CD4-positive, alpha-beta memory T cell (primary cell): ENCODE measurements at regions of chr9 and their contacts with region 1.

Region 1: GRCh38 chr9:78053627-78054026 is 22.0 kb upstream of the GNAQ start:
- DNase-seq: no peak
- H3K4me3 ChIP-seq: no peak overlapping the region
- H3K4me3 Mint-ChIP-seq: peak overlapping the region in 6 of 8 donors; percentile 20 to 82 (median 68)
- H3K27ac ChIP-seq: no peak overlapping the region
- H3K27ac Mint-ChIP-seq: peak overlapping the region in 3 of 7 donors; percentile 35 to 77 (median 67)
- H3K4me1 ChIP-seq: peaks cover 20% of the 10 kb centered on the region
- H3K4me1 Mint-ChIP-seq: peaks cover 14 to 32% (median 23%) of the 10 kb centered on the region in 4 donors
- H3K27me3 ChIP-seq: no peaks in the 10 kb centered on the region
- H3K27me3 Mint-ChIP-seq: no peaks in the 10 kb centered on the region

Region 2: GRCh38 chr9:78074385-78075291 is 21.0 kb after region 1 on chr9:
- CTCF ChIA-PET with region 1: interaction called, 3 read pairs
- POLR2A ChIA-PET with region 1: interaction called, 7 read pairs
- intact Hi-C with region 1: loop called (anchors 1 kb)
- DNase-seq: peak; percentile 31 to 55 (median 48)
- H3K4me3 ChIP-seq: peak overlapping the region in 1 of 2 donors; percentile 44
- H3K4me3 Mint-ChIP-seq: peak overlapping the region; percentile 62 to 89 (median 80)
- H3K27ac ChIP-seq: peak overlapping the region; percentile 7
- H3K27ac Mint-ChIP-seq: peak overlapping the region; percentile 80 to 96 (median 91)
- H3K4me1 ChIP-seq: peaks cover 40% of the 10 kb centered on the region
- H3K4me1 Mint-ChIP-seq: peaks cover 45 to 60% (median 54%) of the 10 kb centered on the region in 4 donors
- H3K27me3 ChIP-seq: no peaks in the 10 kb centered on the region
- H3K27me3 Mint-ChIP-seq: no peaks in the 10 kb centered on the region

Region 3: DNA sequence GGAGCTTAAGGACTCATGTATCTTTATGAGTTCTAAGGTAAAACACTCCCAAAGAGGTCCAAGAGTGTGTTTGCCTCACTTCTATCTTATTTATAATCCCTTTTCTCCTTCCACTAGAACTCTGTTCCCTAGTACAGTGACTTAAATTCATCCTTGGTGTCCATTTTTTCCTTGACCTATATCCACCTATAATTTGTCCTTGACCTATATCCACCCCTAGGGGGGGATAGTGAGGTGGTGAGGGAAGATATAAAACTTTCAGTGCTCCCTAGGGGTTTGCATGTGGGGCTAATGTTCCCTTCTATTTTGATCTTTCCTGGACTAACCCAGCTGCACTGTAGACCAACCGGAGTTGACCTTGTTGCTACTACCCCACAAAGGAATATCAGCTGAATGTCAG is 61.4 kb after region 1 on chr9:
- CTCF ChIA-PET with region 1: interaction called, 12 read pairs
- POLR2A ChIA-PET with region 1: no interaction called
- intact Hi-C with region 1: no loop called
- DNase-seq: peak in 1 of 5 donors; percentile 21
- H3K4me3 ChIP-seq: no peak overlapping the region
- H3K4me3 Mint-ChIP-seq: no peak overlapping the region
- H3K27ac ChIP-seq: no peak overlapping the region
- H3K27ac Mint-ChIP-seq: peak overlapping the region in 1 of 7 donors; percentile 40
- H3K4me1 ChIP-seq: peaks cover 52% of the 10 kb centered on the region
- H3K4me1 Mint-ChIP-seq: peaks cover 44 to 70% (median 54%) of the 10 kb centered on the region in 4 donors
- H3K27me3 ChIP-seq: no peaks in the 10 kb centered on the region
- H3K27me3 Mint-ChIP-seq: no peaks in the 10 kb centered on the region

Region 4: DNA sequence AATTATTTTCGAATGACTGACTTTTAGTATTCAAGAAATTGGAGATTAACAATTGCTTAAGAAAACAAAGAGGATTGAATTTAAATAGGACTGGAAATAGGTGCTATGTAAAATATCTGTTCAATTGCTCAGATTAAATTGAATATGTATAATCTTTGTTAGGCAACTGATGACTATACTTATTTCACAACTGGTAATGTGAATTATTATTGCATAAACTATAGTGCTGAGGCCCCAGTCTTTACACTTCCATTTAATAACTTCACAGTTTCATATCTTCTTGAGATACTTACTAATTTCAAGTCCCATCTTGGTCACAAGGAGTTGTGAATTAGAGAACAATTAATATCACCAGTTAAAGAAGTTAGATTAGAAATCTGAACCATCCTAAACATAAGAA is 199.0 kb after region 1 on chr9:
- CTCF ChIA-PET with region 1: no interaction called
- POLR2A ChIA-PET with region 1: no interaction called
- intact Hi-C with region 1: no loop called
- DNase-seq: no peak
- H3K4me3 ChIP-seq: no peak overlapping the region
- H3K4me3 Mint-ChIP-seq: no peak overlapping the region
- H3K27ac ChIP-seq: no peak overlapping the region
- H3K27ac Mint-ChIP-seq: no peak overlapping the region
- H3K4me1 ChIP-seq: no peaks in the 10 kb centered on the region
- H3K4me1 Mint-ChIP-seq: no peaks in the 10 kb centered on the region
- H3K27me3 ChIP-seq: no peaks in the 10 kb centered on the region
- H3K27me3 Mint-ChIP-seq: no peaks in the 10 kb centered on the region

Region 5: DNA sequence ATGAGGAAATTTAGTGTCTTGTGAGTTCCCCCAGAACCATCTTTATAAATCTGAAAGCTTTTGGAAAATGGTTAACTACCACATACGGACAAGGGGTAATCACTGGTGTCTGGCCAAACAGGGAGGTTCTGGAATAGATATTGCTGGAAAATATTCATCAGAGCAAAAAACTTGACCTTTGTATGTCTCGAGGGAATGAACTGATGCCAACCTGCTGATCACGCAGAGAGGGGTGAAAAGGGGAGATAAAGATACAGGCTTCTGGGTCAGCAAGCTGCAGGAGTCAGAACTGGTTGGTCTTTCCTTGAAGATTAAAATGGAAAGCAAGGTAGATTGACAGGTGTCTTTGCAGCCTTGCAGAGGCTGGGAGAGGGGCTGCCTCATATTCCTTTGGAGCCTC is 278.8 kb after region 1 on chr9:
- CTCF ChIA-PET with region 1: no interaction called
- POLR2A ChIA-PET with region 1: no interaction called
- intact Hi-C with region 1: no loop called
- DNase-seq: no peak
- H3K4me3 ChIP-seq: no peak overlapping the region
- H3K4me3 Mint-ChIP-seq: no peak overlapping the region
- H3K27ac ChIP-seq: no peak overlapping the region
- H3K27ac Mint-ChIP-seq: no peak overlapping the region
- H3K4me1 ChIP-seq: no peaks in the 10 kb centered on the region
- H3K4me1 Mint-ChIP-seq: no peaks in the 10 kb centered on the region
- H3K27me3 ChIP-seq: no peaks in the 10 kb centered on the region
- H3K27me3 Mint-ChIP-seq: peaks cover 2 to 7% of the 10 kb centered on the region in 2 donors